Left lung (tissue), 14 donors: ENCODE measurements at regions of chr7 and their contacts with region 1.

Region 1: GRCh38 chr7:43260980-43261878 is 148.8 kb downstream of the HECW1 start:
- DNase-seq: peak in 3 of 4 donors; percentile 49 to 79 (median 59)
- ATAC-seq: peak; percentile 96
- H3K4me3 ChIP-seq: no peak overlapping the region
- H3K27ac ChIP-seq: no peak overlapping the region
- H3K4me1 ChIP-seq: no peaks in the 10 kb centered on the region
- H3K27me3 ChIP-seq: peaks cover 0 to 13% of the 10 kb centered on the region in 2 donors
- CTCF ChIP-seq: peak; percentile 87 to 93

Region 2: GRCh38 chr7:42945821-42946626 is 315.2 kb before region 1 on chr7:
- intact Hi-C with region 1: loop called in 1 of 2 experiments (anchors 5 kb)
- DNase-seq: peak in 1 of 4 donors; percentile 68
- ATAC-seq: peak; percentile 19
- H3K4me3 ChIP-seq: no peak overlapping the region
- H3K27ac ChIP-seq: no peak overlapping the region
- H3K4me1 ChIP-seq: no peaks in the 10 kb centered on the region
- H3K27me3 ChIP-seq: no peaks in the 10 kb centered on the region
- CTCF ChIP-seq: no peak